Sciatic nerve (tissue), 2 donors: ENCODE measurements at regions of chr2 and their contacts with region 1.

Region 1: GRCh38 chr2:66748939-66749338 is 314.0 kb downstream of the MEIS1 start:
- DNase-seq: no peak
- ATAC-seq: no peak

Region 2: DNA sequence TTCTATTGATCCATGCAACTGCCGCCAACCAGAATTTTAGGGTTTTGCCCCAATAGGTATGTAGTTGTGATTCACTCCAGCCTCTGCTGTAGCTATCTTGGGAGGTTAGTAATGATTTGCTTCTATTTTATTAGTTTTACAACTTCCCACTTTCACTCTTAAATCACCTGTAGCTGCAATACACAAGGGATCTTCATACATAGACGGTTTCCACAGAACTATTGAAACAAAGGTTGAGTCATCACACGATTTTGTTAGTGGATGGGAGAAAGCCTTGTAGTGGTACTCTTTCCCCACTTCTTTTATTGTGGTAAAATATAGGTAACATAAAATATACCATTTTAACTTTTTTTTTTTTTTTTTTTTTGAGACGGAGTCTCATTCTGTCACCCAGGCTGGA is 1212.3 kb before region 1 on chr2:
- intact Hi-C with region 1: loop called (anchors 5 kb)
- DNase-seq: no peak
- ATAC-seq: no peak

Region 3: GRCh38 chr2:65678779-65679391 is 1070.1 kb before region 1 on chr2:
- intact Hi-C with region 1: no loop called
- DNase-seq: no peak
- ATAC-seq: no peak

Region 4: DNA sequence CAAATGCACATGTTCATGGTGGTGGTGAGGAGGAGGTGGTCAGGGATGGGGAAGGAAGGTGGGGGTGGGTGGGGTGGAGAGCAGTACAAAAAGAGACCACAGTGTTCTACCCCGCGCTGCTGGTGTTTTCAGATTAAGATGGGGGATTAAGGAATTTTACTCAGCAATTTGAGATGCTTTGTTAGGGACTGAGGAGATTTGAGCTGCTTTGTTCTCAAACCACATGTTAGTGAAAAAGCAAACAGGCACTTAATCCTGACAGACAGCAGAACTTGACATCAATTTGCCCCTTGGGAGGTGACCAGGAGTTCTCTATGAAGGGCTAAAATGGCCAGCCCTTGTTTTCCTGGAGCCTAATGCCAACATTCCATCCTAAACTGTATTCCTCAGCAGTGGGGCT is 69.5 kb before region 1 on chr2:
- intact Hi-C with region 1: no loop called
- DNase-seq: no peak
- ATAC-seq: no peak

Region 5: GRCh38 chr2:66704786-66705185 is 44.2 kb before region 1 on chr2:
- intact Hi-C with region 1: no loop called
- DNase-seq: no peak
- ATAC-seq: no peak

Region 6: DNA sequence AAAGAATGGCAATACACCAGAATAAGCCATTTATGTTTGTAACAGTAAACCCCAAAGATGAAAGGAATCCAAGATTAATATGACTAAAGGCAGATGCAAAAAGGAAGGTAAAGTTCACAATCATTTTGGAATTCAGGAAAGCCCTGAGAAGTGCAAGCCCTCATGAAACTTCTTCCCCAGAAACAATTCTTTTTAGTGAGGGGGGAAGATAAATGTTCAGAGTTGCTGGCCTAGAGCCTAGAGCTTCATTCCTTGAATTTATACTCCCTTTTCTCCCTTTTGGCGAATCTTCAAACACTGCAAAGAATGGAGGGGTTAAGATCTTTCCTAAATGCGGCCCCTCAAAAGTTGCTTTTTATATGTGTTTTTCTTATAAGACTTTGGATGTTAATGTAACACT is 54.8 kb after region 1 on chr2:
- intact Hi-C with region 1: no loop called
- DNase-seq: no peak
- ATAC-seq: no peak